Esophagus muscularis mucosa (tissue), 4 donors: ENCODE measurements at regions of chr12 and their contacts with region 1.

Region 1: GRCh38 chr12:22459838-22460490 is 84.4 kb downstream of the C2CD5 start:
- DNase-seq: no peak
- H3K4me3 ChIP-seq: no peak overlapping the region
- H3K27ac ChIP-seq: no peak overlapping the region
- H3K4me1 ChIP-seq: no peaks in the 10 kb centered on the region
- H3K27me3 ChIP-seq: no peaks in the 10 kb centered on the region
- CTCF ChIP-seq: peak; percentile 52 to 64 (median 55)
- EP300 ChIP-seq: no peak
- POLR2A ChIP-seq: no peak

Region 2: DNA sequence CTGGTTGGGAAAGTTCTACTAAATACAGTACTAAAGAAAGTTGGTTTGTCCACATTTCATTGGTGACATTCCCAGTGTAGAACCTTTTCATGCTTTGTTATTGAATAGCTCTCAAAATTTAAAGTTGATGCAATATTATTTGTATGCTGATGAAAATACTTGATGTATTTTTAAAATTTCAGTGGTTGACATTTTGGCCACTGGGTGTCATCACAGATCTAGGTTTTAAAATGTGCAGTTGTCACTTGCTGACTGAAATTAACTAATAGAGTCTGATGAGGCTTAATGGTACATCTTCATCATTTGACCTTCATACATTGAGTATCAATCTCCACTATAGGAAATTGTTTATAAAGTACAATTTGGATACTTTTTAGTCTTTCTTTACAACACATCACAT is 376.8 kb before region 1 on chr12:
- intact Hi-C with region 1: loop called (anchors 2 kb)
- DNase-seq: no peak
- H3K4me3 ChIP-seq: no peak overlapping the region
- H3K27ac ChIP-seq: no peak overlapping the region
- H3K4me1 ChIP-seq: no peaks in the 10 kb centered on the region
- H3K27me3 ChIP-seq: no peaks in the 10 kb centered on the region
- CTCF ChIP-seq: peak; percentile 59 to 66 (median 60)
- EP300 ChIP-seq: no peak
- POLR2A ChIP-seq: no peak

Region 3: GRCh38 chr12:22431693-22432251 is 28.2 kb before region 1 on chr12:
- intact Hi-C with region 1: no loop called
- DNase-seq: no peak
- H3K4me3 ChIP-seq: no peak overlapping the region
- H3K27ac ChIP-seq: no peak overlapping the region
- H3K4me1 ChIP-seq: peaks cover 0 to 8% (median 5%) of the 10 kb centered on the region in 4 donors
- H3K27me3 ChIP-seq: no peaks in the 10 kb centered on the region
- CTCF ChIP-seq: no peak
- EP300 ChIP-seq: no peak
- POLR2A ChIP-seq: no peak